Breast epithelium (tissue), 4 donors: ENCODE measurements at regions of chr17 and their contacts with region 1.

Region 1: GRCh38 chr17:79487149-79487548 is 123.7 kb downstream of the RBFOX3 start:
- DNase-seq: no peak
- H3K4me3 ChIP-seq: no peak overlapping the region
- H3K27ac ChIP-seq: no peak overlapping the region
- H3K4me1 ChIP-seq: no peaks in the 10 kb centered on the region
- H3K27me3 ChIP-seq: peaks cover 0 to 37% of the 10 kb centered on the region in 2 donors
- CTCF ChIP-seq: no peak
- POLR2A ChIP-seq: no peak

Region 2: DNA sequence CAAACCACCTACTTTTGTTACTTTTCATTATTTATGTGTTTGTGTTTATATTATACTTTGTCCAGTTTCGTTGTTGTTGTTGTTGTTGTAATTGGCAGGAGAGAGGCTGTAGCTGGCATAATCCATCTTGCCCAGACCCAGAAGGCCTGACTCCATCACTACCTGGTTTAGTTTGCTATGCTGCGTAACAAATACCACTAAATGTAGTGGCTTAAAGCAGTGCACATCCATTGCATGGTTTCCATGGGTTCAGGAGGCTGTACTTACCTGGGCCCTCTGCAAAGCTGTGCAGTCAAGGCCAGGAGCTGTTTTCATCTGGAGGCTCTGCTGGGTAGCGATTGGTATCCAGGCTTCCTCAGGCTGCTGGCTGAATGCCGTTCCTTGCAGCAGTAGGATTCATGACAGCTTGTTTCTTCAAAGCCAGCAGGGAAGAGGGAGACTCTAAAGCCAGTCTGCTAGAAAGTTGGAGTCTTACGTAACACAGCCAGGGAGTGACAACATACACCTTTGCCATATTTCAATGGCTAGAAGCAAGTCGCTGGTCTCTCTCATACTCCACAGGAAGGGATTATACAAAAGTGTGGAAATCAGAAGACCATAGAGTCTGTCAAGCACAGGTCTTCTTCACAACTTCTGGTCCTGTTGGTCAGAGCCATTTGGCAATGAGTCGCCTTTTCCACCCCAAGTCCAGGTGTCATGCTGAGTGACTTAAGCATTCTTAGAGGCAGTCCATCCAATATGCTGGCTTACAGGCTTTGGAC is 1487.6 kb before region 1 on chr17:
- intact Hi-C with region 1: no loop called
- DNase-seq: no peak
- H3K4me3 ChIP-seq: no peak overlapping the region
- H3K27ac ChIP-seq: no peak overlapping the region
- H3K4me1 ChIP-seq: no peaks in the 10 kb centered on the region
- H3K27me3 ChIP-seq: no peaks in the 10 kb centered on the region
- CTCF ChIP-seq: no peak
- POLR2A ChIP-seq: no peak

Region 3: GRCh38 chr17:79325709-79326430 is 161.3 kb before region 1 on chr17:
- intact Hi-C with region 1: no loop called
- DNase-seq: no peak
- H3K4me3 ChIP-seq: no peak overlapping the region
- H3K27ac ChIP-seq: no peak overlapping the region
- H3K4me1 ChIP-seq: no peaks in the 10 kb centered on the region
- H3K27me3 ChIP-seq: peaks cover 0 to 94% of the 10 kb centered on the region in 2 donors
- CTCF ChIP-seq: no peak
- POLR2A ChIP-seq: no peak

Region 4: GRCh38 chr17:79453481-79453880 is 33.7 kb before region 1 on chr17:
- intact Hi-C with region 1: loop called (anchors 1 kb)
- DNase-seq: no peak
- H3K4me3 ChIP-seq: no peak overlapping the region
- H3K27ac ChIP-seq: no peak overlapping the region
- H3K4me1 ChIP-seq: no peaks in the 10 kb centered on the region
- H3K27me3 ChIP-seq: peaks cover 0 to 6% of the 10 kb centered on the region in 2 donors
- CTCF ChIP-seq: no peak
- POLR2A ChIP-seq: no peak